IMR-90 (cell line): ENCODE measurements at regions of chr16 and their contacts with region 1.

Region 1: DNA sequence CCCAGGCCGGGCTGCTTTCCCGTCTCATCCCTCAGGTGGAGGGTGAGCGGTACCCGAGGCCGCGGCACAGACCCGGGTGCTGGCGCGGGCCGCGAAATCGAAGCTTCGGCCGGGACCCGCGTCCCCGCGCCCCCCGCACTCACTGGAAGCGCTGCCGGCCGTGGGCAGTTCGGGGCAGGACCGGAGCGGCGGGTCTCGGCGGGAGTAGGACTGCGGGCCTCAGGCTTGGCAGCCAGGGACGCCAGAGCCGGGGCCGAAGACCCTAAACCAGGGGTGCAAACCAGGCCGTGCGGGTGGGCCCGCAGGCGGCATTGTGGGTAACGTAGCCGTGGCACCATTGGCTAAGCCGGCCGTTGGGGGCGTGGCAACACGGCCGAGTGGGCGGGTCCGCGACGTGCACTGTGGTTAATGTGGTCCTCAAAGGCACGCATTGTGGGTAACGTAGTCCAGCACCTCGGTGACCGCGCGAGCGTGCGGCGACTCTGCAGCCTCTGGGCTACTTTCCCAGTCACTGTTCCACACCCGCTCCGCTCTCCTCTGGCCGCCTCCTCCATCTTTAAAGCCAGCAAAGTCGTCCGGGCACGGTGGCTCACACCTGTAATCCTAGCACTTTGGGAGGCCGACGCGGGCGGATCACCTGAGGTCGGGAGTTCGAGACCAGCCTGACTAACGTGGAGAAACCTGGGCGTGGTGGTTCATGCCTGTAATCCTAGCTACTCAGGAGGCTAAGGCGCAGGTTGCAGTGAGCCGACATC is at the start of gene ZNF500:
- DNase-seq: peak; percentile 95
- ATAC-seq: peak; percentile 92
- H3K4me3 ChIP-seq: peak within 1 kb of the TSS; percentile 88
- H3K27ac ChIP-seq: peak within 1 kb of the TSS; percentile 75
- H3K4me1 ChIP-seq: peaks cover 7% of the 10 kb centered on the region
- H3K27me3 ChIP-seq: no peaks in the 10 kb centered on the region
- CTCF ChIP-seq: no peak
- POLR2A ChIP-seq: peak; percentile 74
- RAD21 ChIP-seq: no peak
- total RNA-seq, gene ZNF500: 4.5 and 4.7 TPM in 2 replicates

Region 2: GRCh38 chr16:4734063-4734729 is 32.9 kb before region 1 on chr16 and contains the starts of genes ANKS3 and DNAAF8:
- CTCF ChIA-PET with region 1: no interaction called
- POLR2A ChIA-PET with region 1: no interaction called
- dilution Hi-C with region 1: no loop called
- in situ Hi-C with region 1: no loop called
- intact Hi-C with region 1: loop called (anchors 2 kb)
- DNase-seq: peak; percentile 97
- ATAC-seq: peak; percentile 95
- H3K4me3 ChIP-seq: peak within 1 kb of the TSS; percentile 89
- H3K27ac ChIP-seq: peak within 1 kb of the TSS; percentile 84
- H3K4me1 ChIP-seq: peaks cover 4% of the 10 kb centered on the region
- H3K27me3 ChIP-seq: no peaks in the 10 kb centered on the region
- CTCF ChIP-seq: no peak
- POLR2A ChIP-seq: no peak; the same call in 1 of the 2 replicates
- RAD21 ChIP-seq: no peak
- total RNA-seq, gene ANKS3: 22.2 and 24.4 TPM in 2 replicates
- total RNA-seq, gene DNAAF8: 0.54 and 0.56 TPM in 2 replicates

Region 3: GRCh38 chr16:4802659-4803287 is 35.7 kb after region 1 on chr16:
- CTCF ChIA-PET with region 1: no interaction called
- POLR2A ChIA-PET with region 1: interaction called, 12 read pairs
- dilution Hi-C with region 1: no loop called
- in situ Hi-C with region 1: no loop called
- intact Hi-C with region 1: loop called (anchors 5 kb)
- DNase-seq: peak; percentile 88
- ATAC-seq: peak; percentile 97
- H3K4me3 ChIP-seq: peak overlapping the region; percentile 94
- H3K27ac ChIP-seq: peak overlapping the region; percentile 59
- H3K4me1 ChIP-seq: peaks cover 5% of the 10 kb centered on the region; the same call in 1 of the 2 replicates
- H3K27me3 ChIP-seq: no peaks in the 10 kb centered on the region
- CTCF ChIP-seq: no peak
- POLR2A ChIP-seq: no peak
- RAD21 ChIP-seq: no peak

Region 4: DNA sequence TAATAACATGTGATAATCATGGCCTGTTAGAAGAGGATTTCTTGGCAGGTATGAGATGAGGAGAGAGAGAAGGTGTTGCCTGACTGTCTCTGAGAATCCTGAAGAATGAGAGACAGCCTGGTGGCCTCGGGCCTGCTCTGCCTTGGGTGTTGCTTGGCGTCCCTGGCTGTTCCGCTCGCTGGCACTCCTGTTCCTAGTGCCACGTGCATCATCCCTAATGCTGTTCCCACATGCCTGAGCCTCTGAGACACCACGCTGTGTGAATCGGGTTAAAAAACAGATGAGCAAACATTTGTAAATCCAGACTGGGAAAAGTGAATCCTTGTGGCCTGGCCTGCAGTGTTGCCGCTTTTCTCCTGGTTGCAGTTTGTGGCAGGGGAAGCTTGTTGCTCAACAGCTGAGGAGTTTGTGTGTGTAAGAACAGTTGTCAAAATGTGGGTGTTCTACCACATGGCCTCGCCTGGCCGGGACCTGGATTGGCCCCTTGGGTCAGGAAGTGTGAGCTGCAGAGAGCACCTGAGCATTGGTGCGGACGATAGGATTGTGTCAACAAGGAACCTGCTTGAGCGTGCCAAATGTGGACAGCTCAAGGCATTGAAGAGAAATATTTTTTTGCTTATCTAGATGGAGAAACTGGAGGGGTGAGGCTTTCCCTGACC is 102.2 kb after region 1 on chr16:
- CTCF ChIA-PET with region 1: no interaction called
- POLR2A ChIA-PET with region 1: no interaction called
- dilution Hi-C with region 1: no loop called
- in situ Hi-C with region 1: no loop called
- intact Hi-C with region 1: no loop called
- DNase-seq: no peak
- ATAC-seq: no peak
- H3K4me3 ChIP-seq: no peak overlapping the region
- H3K27ac ChIP-seq: no peak overlapping the region
- H3K4me1 ChIP-seq: no peaks in the 10 kb centered on the region
- H3K27me3 ChIP-seq: no peaks in the 10 kb centered on the region
- CTCF ChIP-seq: no peak
- POLR2A ChIP-seq: no peak
- RAD21 ChIP-seq: no peak

Region 5: DNA sequence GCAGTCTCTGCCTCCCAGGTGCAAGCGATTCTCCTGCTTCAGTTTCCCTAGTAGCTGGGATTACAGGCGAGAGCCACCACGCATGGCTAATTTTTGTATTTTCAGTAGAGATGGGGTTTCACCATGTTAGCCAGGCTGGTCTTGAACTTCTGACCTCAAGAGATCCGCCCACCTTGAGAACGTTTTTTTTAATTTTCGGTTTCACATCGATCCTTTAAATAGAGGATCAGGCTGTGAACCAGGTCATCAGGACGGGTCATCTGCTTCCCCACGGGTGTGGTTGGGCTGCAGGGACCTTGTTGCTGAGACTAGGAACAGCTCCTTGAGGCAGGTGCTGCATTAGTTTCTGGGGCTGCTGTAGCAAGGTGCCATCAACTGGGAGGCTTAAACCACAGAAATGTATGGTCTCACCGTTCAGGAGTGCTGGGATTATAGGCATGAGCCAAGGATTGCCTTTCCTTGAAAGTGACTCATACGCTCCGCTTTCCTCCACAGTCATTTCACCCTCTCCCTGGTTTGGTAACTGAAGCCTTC is 274.6 kb after region 1 on chr16:
- CTCF ChIA-PET with region 1: no interaction called
- POLR2A ChIA-PET with region 1: no interaction called
- dilution Hi-C with region 1: no loop called
- in situ Hi-C with region 1: no loop called
- intact Hi-C with region 1: no loop called
- DNase-seq: peak; percentile 83
- ATAC-seq: peak; percentile 79
- H3K4me3 ChIP-seq: no peak overlapping the region
- H3K27ac ChIP-seq: no peak overlapping the region
- H3K4me1 ChIP-seq: no peaks in the 10 kb centered on the region; the same call in 1 of the 2 replicates
- H3K27me3 ChIP-seq: peaks cover 2% of the 10 kb centered on the region; the same call in 1 of the 2 replicates
- CTCF ChIP-seq: no peak
- POLR2A ChIP-seq: no peak
- RAD21 ChIP-seq: no peak